OCI-LY7 (cell line): ENCODE measurements at regions of chr12 and their contacts with region 1.

Region 1: GRCh38 chr12:94762259-94762942 is 112.0 kb upstream of the TMCC3 start:
- DNase-seq: peak; percentile 50
- H3K4me3 ChIP-seq: no peak overlapping the region
- H3K27ac ChIP-seq: peak overlapping the region; percentile 5
- H3K4me1 ChIP-seq: peaks cover 35% of the 10 kb centered on the region
- CTCF ChIP-seq: no peak

Region 2: DNA sequence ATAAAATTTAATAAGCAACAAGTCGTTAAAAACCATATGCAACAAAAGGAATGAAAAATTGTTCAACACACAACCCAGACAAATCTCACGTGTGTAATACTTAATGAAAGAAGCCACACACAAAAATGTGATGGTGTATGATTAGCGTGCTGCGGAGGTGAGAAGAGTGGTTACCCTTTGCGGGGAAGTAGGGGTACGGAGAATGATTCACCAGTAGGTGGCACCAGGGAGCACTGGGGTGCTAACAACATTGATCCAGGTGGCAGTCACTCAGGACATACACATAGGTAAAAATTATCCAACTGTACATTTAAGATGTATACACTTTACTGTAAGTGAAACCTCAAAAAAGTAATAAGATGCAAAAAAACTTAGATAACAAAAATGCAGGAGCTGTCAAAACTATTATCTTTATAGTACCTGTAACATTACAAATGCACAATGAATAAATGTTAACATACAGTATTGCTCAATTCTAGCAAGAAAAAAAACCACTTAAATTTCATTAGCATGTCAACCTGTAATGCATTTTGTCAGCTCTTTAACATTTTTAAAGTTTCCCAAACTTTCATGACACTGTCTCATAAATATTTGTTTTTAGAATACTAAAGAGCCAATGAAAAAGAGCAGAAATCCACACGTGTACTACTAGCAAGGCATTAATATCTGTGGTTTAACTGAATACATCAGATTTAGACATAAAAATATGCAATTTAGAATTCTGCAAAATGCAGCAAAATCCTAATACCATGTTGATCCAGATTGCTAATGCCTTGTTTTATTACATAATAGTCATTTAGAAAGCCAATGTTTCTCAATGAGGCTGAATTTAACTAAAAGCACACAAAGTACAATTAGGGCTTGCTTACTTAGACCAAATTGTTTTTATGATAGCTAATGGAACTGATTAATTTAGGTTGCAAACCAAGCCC is 158.7 kb before region 1 on chr12:
- CTCF ChIA-PET with region 1: no interaction called
- POLR2A ChIA-PET with region 1: no interaction called
- intact Hi-C with region 1: loop called (anchors 5 kb)
- DNase-seq: peak; percentile 61
- H3K4me3 ChIP-seq: no peak overlapping the region
- H3K27ac ChIP-seq: no peak overlapping the region
- H3K4me1 ChIP-seq: no peaks in the 10 kb centered on the region
- CTCF ChIP-seq: peak; percentile 96

Region 3: DNA sequence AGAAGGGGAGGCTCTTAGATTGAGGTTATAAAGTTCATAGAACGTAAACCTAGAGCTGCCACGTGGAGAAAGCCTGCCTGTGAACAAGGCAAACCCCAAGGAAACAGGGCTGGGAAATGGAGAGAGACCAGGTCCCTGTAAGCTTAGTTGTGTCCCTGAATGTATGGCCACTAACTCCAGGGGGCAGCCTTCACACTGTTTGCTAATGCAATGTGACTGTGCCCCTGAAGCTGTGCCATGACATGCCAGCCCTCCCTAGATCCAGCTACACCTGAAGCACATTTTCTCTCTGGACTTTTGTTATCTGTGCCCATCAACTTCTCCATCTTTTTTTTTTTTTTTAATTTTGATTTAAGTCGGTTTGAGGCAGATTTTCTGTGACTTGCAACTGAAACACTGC is 51.5 kb before region 1 on chr12:
- CTCF ChIA-PET with region 1: no interaction called
- POLR2A ChIA-PET with region 1: interaction called, 4 read pairs
- intact Hi-C with region 1: loop called (anchors 1 kb)
- DNase-seq: peak; percentile 75
- H3K4me3 ChIP-seq: no peak overlapping the region
- H3K27ac ChIP-seq: no peak overlapping the region
- H3K4me1 ChIP-seq: peaks cover 8% of the 10 kb centered on the region
- CTCF ChIP-seq: peak; percentile 84

Region 4: GRCh38 chr12:95286713-95287112 is 524.3 kb after region 1 on chr12:
- CTCF ChIA-PET with region 1: no interaction called
- POLR2A ChIA-PET with region 1: no interaction called
- intact Hi-C with region 1: no loop called
- DNase-seq: no peak
- H3K4me3 ChIP-seq: no peak overlapping the region
- H3K27ac ChIP-seq: no peak overlapping the region
- H3K4me1 ChIP-seq: no peaks in the 10 kb centered on the region
- CTCF ChIP-seq: no peak